ENCODE measurements at regions of chr13 and their contacts with region 1.

Region 1: DNA sequence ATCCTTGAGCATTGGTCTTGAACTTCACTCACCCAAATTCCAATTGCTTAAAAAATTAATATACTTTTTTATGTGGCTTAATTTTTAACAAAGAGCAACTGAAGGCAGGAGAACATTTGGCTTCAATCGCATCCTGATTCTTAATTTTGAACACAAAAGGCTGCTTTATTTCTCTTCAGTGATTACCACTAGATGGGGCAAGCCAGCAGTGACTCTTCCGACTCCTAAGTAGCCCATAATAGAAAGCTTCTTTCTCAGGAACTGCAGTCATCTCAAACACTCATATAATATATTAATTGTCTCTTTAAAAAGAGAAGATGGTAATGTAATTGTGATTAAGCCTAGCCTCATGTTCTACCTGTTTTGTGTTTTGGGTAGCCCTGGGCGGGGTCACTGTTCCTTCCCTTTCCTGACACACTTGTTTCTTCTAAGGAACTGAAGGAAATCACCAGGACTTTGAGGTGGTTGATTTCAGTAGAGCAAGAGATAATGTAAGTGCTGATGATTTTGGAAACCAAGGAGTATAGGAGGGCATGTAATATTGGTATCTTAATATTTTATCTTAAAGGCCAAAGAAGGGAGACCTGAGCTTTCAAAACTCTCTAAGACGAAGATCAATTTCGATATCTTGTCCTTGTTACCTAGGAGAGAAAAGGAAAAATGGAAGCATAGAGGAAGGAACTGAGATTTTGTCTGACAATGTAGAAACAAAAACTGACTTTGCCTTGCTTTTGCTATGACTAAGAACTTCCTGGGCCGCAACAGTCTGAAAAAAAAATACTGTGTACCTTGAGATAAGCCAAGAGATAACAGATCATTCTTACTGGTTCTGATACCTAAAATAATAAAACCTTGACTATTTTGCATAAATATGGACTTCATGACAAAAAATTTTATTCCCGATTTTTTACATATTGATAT is 73.1 kb downstream of the TNFSF13B start:
- DNase-seq: peak; percentile 6
- H3K4me3 ChIP-seq: no peak overlapping the region
- H3K27ac ChIP-seq: no peak overlapping the region
- H3K4me1 ChIP-seq: no peaks in the 10 kb centered on the region
- H3K27me3 ChIP-seq: peaks cover 2% of the 10 kb centered on the region
- CTCF ChIP-seq: peak; percentile 47 to 72

Region 2: GRCh38 chr13:108377646-108378206 is 35.1 kb after region 1 on chr13:
- CTCF ChIA-PET with region 1: no interaction called
- dilution Hi-C with region 1: loop called (anchors 5 kb)
- in situ Hi-C with region 1: no loop called
- intact Hi-C with region 1: no loop called
- DNase-seq: no peak
- H3K4me3 ChIP-seq: no peak overlapping the region
- H3K27ac ChIP-seq: no peak overlapping the region
- H3K4me1 ChIP-seq: no peaks in the 10 kb centered on the region
- H3K27me3 ChIP-seq: no peaks in the 10 kb centered on the region
- CTCF ChIP-seq: no peak